Naive thymus-derived CD4-positive, alpha-beta T cell (primary cell): ENCODE measurements at regions of chr2 and their contacts with region 1.

Region 1: GRCh38 chr2:197286805-197287598 is 23.6 kb downstream of the ANKRD44 start:
- DNase-seq: peak in 7 of 9 donors; percentile 52 to 83 (median 74)
- ATAC-seq: peak; percentile 96
- H3K4me3 ChIP-seq: no peak overlapping the region
- H3K4me3 Mint-ChIP-seq: peak overlapping the region; percentile 70 to 90 (median 86)
- H3K27ac ChIP-seq: peak overlapping the region; percentile 55
- H3K27ac Mint-ChIP-seq: peak overlapping the region; percentile 87 to 99 (median 98)
- H3K4me1 ChIP-seq: peaks cover 75 to 90% of the 10 kb centered on the region in 2 donors
- H3K4me1 Mint-ChIP-seq: peaks cover 60 to 96% (median 83%) of the 10 kb centered on the region in 7 donors
- H3K27me3 ChIP-seq: no peaks in the 10 kb centered on the region
- H3K27me3 Mint-ChIP-seq: no peaks in the 10 kb centered on the region

Region 2: GRCh38 chr2:197229509-197230443 is 57.2 kb before region 1 on chr2:
- CTCF ChIA-PET with region 1: no interaction called
- POLR2A ChIA-PET with region 1: interaction called, 10 read pairs
- intact Hi-C with region 1: no loop called
- DNase-seq: no peak
- ATAC-seq: no peak
- H3K4me3 ChIP-seq: no peak overlapping the region
- H3K4me3 Mint-ChIP-seq: peak overlapping the region in 9 of 10 donors; percentile 26 to 83 (median 47)
- H3K27ac ChIP-seq: peak overlapping the region; percentile 58
- H3K27ac Mint-ChIP-seq: peak overlapping the region in 8 of 9 donors; percentile 20 to 96 (median 82)
- H3K4me1 ChIP-seq: peaks cover 69 to 72% of the 10 kb centered on the region in 2 donors
- H3K4me1 Mint-ChIP-seq: peaks cover 68 to 100% (median 98%) of the 10 kb centered on the region in 7 donors
- H3K27me3 ChIP-seq: no peaks in the 10 kb centered on the region
- H3K27me3 Mint-ChIP-seq: no peaks in the 10 kb centered on the region

Region 3: DNA sequence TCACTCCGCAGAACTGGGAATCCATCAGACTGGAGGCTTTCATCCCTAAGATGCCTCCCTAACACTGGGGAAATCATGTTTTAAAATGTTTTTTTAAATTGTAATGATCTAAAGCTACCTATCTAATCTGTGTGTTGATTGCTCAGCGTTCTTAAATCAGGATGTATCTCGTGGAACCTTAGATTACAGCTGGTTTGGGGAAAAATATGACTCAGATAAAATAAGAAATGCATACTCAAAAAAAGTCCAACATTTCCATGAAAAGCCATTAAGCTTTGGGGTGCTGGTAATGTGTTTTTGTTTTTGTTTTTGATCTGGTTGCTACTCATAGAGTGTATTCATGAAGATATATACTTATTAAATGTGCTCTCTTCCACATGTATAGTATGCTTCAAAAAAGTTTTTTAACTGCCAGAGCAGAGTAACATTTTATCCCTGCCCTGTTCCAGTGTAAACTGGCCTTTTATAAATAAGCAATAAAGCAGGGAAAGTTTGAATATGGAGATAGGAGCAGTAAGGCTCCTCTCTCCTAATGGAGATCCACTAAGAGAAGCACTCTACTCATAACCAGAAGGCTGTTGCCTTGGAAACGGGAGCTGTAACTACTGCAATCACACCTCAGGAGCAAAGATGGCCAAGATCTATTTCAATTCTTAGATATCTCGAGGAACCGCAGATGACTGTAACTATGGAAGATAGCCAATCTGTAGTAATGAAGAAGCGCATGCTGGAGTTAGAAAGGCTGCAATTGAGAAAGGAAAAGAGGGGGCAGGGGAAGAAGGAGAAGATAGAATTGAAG is 18.0 kb before region 1 on chr2:
- CTCF ChIA-PET with region 1: interaction called, 3 read pairs
- POLR2A ChIA-PET with region 1: interaction called, 9 read pairs
- intact Hi-C with region 1: loop called (anchors 1 to 2 kb)
- DNase-seq: peak in 2 of 9 donors; percentile 42 to 61
- ATAC-seq: peak; percentile 73
- H3K4me3 ChIP-seq: no peak overlapping the region
- H3K4me3 Mint-ChIP-seq: peak overlapping the region; percentile 1 to 85 (median 58)
- H3K27ac ChIP-seq: peak overlapping the region; percentile 63
- H3K27ac Mint-ChIP-seq: peak overlapping the region; percentile 76 to 96 (median 85)
- H3K4me1 ChIP-seq: peaks cover 76 to 82% of the 10 kb centered on the region in 2 donors
- H3K4me1 Mint-ChIP-seq: peaks cover 60 to 100% (median 92%) of the 10 kb centered on the region in 7 donors
- H3K27me3 ChIP-seq: no peaks in the 10 kb centered on the region
- H3K27me3 Mint-ChIP-seq: no peaks in the 10 kb centered on the region

Region 4: DNA sequence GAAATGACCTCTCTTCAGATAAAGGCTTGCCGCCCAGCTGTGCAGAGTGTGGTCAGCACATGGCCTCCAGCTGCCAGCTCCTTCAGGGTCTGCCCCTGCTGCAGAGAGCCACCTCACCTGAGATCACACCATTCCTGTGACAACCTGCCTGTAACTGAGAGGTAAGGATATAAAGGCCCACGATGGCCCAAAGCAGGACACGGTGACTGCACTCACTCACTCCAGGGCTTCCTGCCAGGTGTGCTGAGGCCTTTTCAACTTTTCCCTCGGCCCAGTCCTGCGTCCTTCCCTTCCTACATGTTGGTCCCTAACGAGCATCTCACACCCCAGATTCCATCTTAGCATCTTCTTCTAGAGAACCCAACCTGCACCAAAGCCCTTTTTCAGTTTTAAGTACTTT is 12.7 kb before region 1 on chr2:
- CTCF ChIA-PET with region 1: interaction called, 3 read pairs
- POLR2A ChIA-PET with region 1: interaction called, 9 read pairs
- intact Hi-C with region 1: loop called (anchors 1 kb)
- DNase-seq: no peak
- ATAC-seq: no peak
- H3K4me3 ChIP-seq: no peak overlapping the region
- H3K4me3 Mint-ChIP-seq: peak overlapping the region; percentile 1 to 66 (median 36)
- H3K27ac ChIP-seq: peak overlapping the region; percentile 48
- H3K27ac Mint-ChIP-seq: peak overlapping the region; percentile 47 to 95 (median 91)
- H3K4me1 ChIP-seq: peaks cover 60 to 62% of the 10 kb centered on the region in 2 donors
- H3K4me1 Mint-ChIP-seq: peaks cover 60 to 92% (median 79%) of the 10 kb centered on the region in 7 donors
- H3K27me3 ChIP-seq: no peaks in the 10 kb centered on the region
- H3K27me3 Mint-ChIP-seq: no peaks in the 10 kb centered on the region

Region 5: GRCh38 chr2:197304556-197305011 is 17.6 kb after region 1 on chr2:
- CTCF ChIA-PET with region 1: interaction called, 5 read pairs
- POLR2A ChIA-PET with region 1: interaction called, 158 read pairs
- intact Hi-C with region 1: loop called in 1 of 2 experiments (anchors 1 kb)
- DNase-seq: no peak
- ATAC-seq: peak; percentile 33
- H3K4me3 ChIP-seq: peak overlapping the region; percentile 20
- H3K4me3 Mint-ChIP-seq: peak overlapping the region; percentile 63 to 98 (median 92)
- H3K27ac ChIP-seq: peak overlapping the region; percentile 85
- H3K27ac Mint-ChIP-seq: peak overlapping the region; percentile 90 to 99 (median 95)
- H3K4me1 ChIP-seq: peaks cover 81 to 82% of the 10 kb centered on the region in 2 donors
- H3K4me1 Mint-ChIP-seq: peaks cover 48 to 90% (median 82%) of the 10 kb centered on the region in 7 donors
- H3K27me3 ChIP-seq: no peaks in the 10 kb centered on the region
- H3K27me3 Mint-ChIP-seq: no peaks in the 10 kb centered on the region